ENCODE measurements at regions of chr2 and their contacts with region 1.

Region 1: GRCh38 chr2:65129826-65130663 is at the start of gene RAB1A:
- DNase-seq: peak; percentile 98 to 100 (median 100)

Region 2: DNA sequence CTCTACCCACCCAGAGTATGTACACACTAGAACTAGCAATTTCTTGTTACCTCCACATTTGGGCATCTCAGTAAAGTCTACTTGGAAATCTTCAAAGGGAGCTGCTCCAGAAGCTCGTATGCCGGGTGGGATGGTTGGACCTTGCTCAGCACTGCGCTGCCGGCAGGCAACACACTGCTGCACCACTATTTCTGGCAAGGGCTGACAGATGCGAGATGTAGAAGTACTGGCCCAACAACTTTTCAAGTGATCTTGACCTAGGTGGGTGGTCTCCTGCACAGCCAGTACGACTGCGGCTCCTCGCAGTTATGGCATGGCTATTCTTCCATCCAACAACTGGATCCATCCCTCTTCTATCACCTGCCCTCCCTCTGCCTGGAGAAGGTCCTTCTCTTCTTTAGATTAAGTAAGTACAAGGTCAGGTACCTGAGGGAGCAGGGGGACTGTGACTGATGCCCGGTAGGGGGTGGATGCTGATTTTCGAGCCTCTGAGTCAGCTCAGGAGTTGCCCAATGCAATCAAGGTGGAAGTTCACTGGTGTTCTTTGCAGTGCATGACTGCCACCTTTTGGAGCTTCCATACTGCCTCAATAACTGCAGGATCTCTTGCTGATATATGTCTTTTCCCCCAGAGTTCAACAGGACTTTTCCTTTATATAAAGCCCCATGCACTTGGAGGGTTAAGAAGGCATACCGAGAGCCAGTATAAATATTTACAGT is 241.3 kb before region 1 on chr2:
- intact Hi-C with region 1: no loop called
- DNase-seq: peak in 1 of 10 donors; percentile 3

Region 3: DNA sequence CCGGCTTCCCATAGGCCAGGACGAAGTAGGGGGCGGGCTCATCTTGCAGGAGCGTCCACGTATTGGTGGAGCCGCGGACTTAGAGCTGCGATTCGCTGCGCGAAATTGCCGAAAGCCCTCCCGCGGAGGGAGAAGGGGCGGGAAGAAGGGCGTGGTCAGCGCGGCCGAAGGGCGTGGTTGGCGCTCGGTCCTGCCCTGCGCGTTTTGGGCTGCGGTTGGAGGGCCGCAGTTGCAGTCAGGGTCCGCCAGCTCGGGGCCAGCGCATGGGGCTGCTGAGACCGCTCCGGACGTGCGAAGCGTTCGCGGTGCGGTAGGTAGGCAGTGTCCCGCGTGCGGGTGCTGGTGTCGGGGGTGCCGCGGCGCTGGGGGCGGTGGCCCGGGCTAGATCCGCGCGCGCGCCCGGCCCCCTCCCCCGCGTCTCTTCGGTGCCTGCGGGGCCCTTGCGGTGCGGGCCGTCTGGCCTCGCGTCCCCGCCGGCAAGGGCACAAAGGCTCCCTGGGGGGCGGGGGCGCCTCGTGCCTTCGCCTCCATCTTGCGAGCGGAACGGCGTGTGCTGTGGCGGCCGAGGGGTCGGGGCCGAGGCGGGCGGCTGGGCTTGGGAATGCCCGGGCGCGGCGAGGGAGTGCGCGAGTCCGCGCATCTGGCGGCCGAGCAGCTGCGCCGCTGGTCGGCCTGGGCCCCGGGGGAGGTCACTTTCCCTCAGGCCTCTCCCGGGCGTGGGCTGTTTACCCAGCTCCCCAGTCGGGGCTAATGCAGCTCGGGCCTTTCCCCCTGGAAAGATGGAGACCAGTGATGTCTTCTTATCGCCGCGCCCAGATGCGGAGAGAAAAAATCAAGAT is 73.6 kb before region 1 on chr2 and contains the start of gene CEP68:
- intact Hi-C with region 1: loop called (anchors 1 kb)
- DNase-seq: peak; percentile 95 to 100 (median 96)

Region 4: GRCh38 chr2:65227425-65228262 is 97.6 kb after region 1 on chr2 and contains the start of gene ACTR2:
- intact Hi-C with region 1: loop called (anchors 5 kb)
- DNase-seq: peak; percentile 92 to 100 (median 96)